ENCODE measurements at regions of chr22 and their contacts with region 1.

Region 1: DNA sequence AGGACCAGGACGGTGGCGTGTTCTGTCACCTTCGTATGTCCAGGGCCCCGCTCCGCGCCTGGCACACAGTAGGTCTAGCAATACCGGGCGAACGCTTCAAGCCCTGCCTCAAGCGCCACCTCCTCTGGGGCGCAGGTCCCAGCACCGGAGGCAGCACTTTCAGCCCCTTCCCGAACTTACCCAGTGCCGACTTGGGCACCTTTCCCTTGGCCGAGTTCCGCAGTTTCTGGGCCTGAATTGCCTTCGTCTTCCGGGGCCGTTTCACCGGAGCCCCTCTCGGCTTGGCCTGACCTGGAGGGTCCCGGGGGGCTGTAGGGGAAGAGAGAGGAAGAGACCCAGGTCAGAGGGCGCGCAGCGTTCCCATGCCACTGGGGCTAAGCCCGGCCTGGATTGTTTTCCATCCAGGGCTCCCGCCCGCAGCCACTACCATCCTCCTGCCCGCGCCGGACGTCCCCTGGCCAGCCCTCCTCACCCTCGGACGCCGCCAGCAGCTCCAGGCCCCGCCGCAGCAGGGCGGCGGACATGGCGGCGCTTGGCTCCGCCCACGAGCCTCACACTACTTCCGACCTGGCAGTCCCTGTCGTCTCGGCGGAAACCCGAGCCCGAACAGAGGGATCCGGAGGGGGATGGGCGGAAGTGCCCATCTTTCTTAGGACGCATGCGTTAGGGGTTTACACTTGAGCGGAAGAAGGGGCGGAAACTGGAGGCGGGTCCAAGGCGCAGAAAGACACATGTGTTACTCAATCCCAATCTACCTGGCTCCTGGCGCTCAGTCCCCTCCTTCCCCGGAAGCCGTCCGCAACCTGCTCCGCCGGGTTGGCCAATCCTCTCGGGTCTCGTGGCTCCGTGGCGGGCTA is at the start of gene RPS19BP1:
- DNase-seq: peak; percentile 100
- H3K4me3 Mint-ChIP-seq: peak within 1 kb of the TSS; percentile 98
- H3K27ac Mint-ChIP-seq: peak within 1 kb of the TSS; percentile 93
- H3K4me1 Mint-ChIP-seq: peaks cover 64% of the 10 kb centered on the region
- H3K27me3 Mint-ChIP-seq: no peaks in the 10 kb centered on the region

Region 2: DNA sequence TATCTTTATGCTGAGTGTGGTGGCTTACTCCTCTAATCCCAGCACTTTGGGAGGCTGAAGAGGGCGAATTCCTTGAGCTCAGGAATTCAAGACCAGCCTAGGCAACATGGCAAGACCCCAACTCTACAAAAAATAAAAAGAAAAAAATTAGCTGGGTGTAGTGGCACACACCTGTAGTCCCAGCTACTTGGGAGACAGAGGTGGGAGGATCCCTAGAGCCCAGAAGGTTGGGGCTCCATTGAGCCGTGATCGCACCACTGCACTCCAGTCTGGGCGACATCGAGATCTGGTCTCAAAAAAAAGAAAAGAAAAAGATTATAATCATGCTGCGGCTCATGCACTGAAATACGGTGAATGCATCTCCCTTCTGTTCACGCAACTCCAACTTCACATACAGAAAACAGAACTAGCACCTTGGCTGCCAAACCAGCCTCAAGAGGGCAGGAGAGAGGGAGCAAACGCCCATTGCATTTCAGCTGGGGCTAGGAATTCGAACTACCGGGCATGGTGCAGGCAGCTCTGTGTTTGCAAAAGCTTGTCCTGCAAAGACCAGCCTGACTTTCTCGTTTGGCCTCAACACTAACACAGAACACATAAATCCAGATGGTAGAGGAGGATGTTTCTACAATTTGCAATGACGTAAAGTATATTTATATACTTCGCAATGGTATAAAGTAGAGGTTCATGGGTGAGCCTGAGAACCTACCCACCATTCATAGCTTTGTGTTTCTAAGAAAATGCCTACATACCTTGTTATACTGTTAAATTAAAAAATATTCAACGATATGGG is 189.0 kb before region 1 on chr22:
- CTCF ChIA-PET with region 1: interaction called, 17 read pairs
- DNase-seq: peak; percentile 78
- H3K4me3 Mint-ChIP-seq: no peak overlapping the region
- H3K27ac Mint-ChIP-seq: no peak overlapping the region
- H3K4me1 Mint-ChIP-seq: peaks cover 5% of the 10 kb centered on the region
- H3K27me3 Mint-ChIP-seq: peaks cover 51% of the 10 kb centered on the region

Region 3: DNA sequence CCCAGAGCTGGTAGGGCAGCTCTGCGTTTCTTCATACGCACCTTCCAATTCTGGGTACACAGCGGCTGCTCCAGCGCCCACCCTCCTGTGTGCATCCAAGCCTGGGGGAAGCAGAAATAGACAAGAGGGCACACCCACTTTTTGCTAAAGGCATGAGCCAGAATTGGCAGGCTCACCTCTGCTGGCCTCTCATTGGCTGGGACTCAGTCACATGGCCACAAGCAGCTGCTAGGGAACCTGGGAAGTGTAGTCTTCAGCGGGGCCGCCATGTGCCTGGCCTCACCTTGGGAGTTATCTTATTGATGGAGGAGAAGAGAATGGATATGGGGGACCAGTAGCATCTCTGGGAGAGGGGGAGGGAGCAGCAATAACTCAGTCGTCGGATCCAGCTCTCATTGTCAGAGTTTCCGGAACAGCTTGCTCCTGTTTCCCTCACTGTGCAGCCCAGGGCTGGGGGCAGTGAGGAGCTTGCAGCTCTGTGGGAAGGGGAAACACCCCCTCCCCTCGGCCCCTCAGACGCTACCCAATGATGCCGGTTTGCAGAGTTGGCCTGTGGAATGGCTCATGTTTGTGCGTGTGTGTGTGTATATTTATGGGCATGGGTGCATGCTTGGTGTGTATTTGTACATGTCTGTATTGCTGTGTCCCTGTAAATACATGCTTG is 42.2 kb before region 1 on chr22:
- CTCF ChIA-PET with region 1: interaction called, 216 read pairs
- DNase-seq: peak; percentile 85
- H3K4me3 Mint-ChIP-seq: no peak overlapping the region
- H3K27ac Mint-ChIP-seq: no peak overlapping the region
- H3K4me1 Mint-ChIP-seq: peaks cover 19% of the 10 kb centered on the region
- H3K27me3 Mint-ChIP-seq: peaks cover 4% of the 10 kb centered on the region

Region 4: DNA sequence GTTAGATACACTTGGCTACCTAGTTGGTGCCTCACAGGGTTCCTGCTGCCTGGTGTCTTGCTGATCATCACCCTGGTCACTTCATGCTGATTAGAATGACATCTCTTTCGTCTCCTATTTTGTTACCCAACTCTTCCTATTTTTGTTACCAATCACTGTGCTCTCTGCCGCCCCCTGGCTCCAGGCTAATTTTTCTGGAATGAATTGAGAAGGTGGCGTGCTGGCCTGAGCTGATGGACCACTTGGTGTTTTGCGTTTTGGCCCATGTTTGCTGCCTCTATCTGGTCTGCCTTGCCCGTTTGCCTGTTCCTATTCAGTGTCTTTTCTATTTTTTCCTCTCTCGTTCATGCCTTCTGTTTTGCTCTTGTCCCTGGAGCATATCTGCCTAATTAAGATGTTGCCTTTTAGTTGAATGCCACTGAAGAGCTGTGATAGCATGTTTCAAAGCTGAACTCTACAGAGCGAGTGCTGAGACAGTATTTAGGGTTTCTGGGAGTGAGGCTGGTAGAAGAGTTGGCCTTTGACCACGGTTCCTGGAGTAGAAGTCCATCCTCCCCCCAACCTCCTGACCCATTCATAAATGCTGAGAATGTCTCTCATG is 18.0 kb before region 1 on chr22:
- CTCF ChIA-PET with region 1: interaction called, 60 read pairs
- DNase-seq: peak; percentile 74
- H3K4me3 Mint-ChIP-seq: no peak overlapping the region
- H3K27ac Mint-ChIP-seq: peak overlapping the region; percentile 35
- H3K4me1 Mint-ChIP-seq: peaks cover 38% of the 10 kb centered on the region
- H3K27me3 Mint-ChIP-seq: no peaks in the 10 kb centered on the region

Region 5: DNA sequence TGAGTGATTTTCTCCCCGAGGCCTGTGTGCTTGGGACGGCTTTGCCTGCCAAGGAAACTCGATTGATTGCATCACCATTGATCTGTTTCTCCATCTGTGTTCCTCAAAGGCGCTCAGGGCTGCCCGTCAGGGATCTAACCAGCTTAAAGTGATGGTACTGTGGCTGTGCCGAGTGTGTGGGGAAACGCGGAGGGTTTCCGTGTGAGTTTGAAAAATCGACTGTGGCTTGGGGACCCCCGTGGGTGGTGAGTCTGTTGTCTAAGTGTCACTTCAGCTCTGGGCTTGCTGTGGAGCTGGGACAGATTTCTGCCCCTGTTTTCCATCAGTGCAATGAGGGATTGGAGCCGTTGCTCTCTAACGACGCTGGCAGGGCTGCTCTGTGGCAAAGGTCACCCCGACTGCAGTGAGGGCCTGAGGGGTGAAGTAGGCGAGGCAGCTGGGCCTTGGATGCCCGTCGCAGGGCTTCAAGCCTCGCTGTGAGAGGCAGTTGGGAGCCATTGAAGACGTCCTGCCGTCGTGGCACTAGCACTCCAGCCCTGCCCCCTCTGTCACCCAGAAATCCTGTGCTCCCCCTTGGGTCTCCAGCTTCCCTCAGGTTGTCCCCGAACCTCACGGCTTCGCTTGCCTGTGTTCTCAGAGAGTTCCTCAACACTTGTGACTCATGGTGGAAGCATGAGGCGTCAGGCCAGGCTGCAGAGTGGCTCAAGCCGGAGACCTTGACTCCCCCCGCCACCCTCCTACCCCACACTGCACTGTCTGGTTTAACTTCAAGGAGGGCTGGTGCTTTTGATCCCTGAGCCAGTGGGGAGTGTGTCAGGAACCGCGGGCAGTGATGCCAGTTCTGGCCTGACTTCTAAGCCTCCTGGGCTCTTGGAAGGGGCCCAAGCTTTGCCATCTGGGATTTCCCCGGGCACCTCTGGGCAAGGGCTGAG is 60.0 kb after region 1 on chr22:
- CTCF ChIA-PET with region 1: no interaction called
- DNase-seq: no peak
- H3K4me3 Mint-ChIP-seq: no peak overlapping the region
- H3K27ac Mint-ChIP-seq: no peak overlapping the region
- H3K4me1 Mint-ChIP-seq: peaks cover 2% of the 10 kb centered on the region
- H3K27me3 Mint-ChIP-seq: peaks cover 48% of the 10 kb centered on the region

Measured in activated naive CD4-positive, alpha-beta T cell treated with anti-CD3 and anti-CD28 coated beads, Interleukin-2, amount 10 ng/mL, durations not matched to agents 7 days and 5 days (primary cell).